GM13977 (cell line): ENCODE measurements at regions of chr19 and their contacts with region 1.

Region 1: DNA sequence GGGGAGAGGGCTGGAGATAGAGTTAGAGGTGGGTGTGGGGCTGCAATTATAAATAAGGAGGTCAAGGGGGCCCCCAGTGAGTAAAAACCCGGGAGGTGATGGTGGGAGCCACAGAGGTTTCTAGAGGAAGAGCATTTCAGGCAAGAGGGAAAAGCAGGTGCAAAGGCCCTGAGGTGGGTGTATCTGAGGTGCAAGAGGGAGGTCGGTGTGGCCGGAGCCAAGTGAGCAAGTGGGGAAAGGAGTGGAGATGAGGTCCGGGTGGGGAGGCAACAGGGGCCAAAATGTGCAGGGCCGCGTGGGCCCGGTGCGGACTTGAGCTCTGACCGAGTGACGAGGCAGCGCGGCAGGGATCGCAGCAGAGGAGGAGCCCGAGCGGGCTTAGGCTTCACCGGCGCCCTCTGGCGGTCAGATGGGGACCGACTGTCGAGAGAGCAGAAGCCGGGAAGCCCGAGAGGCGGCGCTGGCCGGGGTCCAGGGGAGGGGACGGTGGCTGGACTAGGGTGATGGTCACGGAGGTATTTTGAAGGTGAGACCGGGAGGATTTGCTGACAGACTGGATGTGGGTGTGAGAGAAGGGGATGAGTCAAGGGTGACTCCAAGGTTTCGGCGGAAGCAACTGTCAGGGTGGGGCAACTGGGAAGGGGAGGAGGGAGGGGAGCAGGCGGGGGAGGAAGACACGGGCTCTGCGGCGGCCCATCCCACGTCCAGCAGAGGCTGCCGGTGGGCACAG is 17.7 kb upstream of the SPACA4 start:
- DNase-seq: peak; percentile 89
- CTCF ChIP-seq: peak; percentile 98

Region 2: GRCh38 chr19:48310227-48310626 is 278.6 kb before region 1 on chr19:
- in situ Hi-C with region 1: loop called (anchors 10 kb)
- DNase-seq: no peak
- CTCF ChIP-seq: no peak

Region 3: DNA sequence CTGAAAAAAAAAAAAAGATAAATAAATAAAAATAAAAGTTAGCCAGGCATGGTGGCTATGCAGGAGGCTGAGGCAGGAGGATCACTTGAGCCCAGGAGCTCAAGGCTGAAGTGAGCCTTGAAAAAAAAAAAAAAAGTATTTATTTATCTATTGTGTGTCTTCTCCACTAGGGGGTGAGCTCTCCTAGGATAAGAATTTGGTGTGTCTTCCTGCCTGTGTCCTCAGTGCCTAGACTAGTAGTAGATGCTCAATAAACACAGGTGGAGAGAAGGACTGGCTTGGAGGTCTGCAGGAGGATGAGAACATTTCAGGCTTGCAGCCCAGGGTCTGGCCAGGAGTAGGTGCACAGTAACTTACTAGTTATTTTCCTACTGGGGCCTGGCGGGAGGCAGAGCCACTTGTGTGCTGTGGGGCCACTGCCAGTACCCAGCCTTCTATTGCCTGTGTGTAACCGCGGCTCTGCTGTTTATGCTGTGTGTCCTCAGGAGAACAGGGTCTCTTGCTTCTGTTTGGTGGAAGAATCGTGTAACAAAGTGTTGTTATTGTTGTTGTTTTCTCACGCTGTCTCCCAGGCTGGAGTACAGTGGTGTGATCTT is 82.6 kb before region 1 on chr19:
- in situ Hi-C with region 1: loop called (anchors 5 kb)
- DNase-seq: peak; percentile 75
- CTCF ChIP-seq: peak; percentile 49

Region 4: GRCh38 chr19:48696353-48697010 is 107.6 kb after region 1 on chr19:
- in situ Hi-C with region 1: no loop called
- DNase-seq: no peak
- CTCF ChIP-seq: no peak